ENCODE measurements at regions of chr16 and their contacts with region 1.

Region 1: DNA sequence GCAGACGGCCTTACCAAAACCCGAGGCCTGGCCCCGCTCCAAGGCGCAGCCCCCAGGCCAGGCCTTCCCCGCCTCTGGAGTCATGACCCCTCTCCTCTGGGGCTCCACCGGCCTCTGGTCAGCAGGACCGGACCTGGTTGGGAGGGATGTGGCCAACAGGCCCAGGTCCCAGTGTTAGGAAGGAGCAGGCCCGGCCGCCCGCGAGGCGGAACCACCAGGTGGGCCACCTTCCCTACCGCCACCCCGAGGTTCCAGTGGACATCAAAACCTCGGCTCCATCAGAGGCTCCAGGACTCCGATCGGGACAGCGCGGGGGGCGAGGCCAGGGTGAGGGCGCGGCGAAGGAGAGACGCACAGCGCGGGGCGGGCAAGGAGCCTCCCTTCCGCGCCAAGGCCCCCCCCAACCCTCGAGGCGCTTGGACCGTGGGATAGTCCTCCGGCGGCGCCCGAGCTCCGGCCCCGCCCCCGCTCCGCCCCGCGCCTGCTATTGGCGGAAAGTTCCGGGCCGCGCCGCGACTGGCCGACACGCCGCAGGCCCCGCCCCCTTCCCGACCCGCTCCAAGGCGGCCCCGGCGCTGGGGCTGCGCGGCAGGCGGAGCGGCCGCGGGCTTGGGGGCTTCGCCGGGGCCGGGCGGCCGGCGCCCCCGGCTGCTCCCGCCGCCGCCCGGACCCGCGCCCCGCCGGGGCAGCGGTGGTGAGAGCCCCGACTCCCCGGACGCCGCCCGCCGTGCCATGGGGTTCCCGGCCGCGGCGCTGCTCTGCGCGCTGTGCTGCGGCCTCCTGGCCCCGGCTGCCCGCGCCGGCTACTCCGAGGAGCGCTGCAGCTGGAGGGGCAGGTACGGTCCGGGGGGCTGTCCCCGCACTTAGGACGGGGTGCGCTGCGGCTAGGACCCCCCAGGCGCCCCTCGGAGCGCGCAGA is at the start of gene METRN:
- DNase-seq: peak; percentile 61
- ATAC-seq: peak; percentile 54
- H3K4me3 ChIP-seq: peak within 1 kb of the TSS; percentile 58 to 77 (median 66); a peak in 5 of 6 replicates
- H3K27ac ChIP-seq: peak within 1 kb of the TSS; percentile 45
- H3K4me1 ChIP-seq: peaks cover 45% of the 10 kb centered on the region
- H3K27me3 ChIP-seq: peaks cover 0 to 16% of the 10 kb centered on the region in 2 experiments; a peak in 3 of 5 replicates
- CTCF ChIP-seq: peak; percentile 15; the same call in 1 of the 2 replicates
- EP300 ChIP-seq: no peak
- POLR2A ChIP-seq: no peak
- RAD21 ChIP-seq: no peak
- total RNA-seq, gene METRN: 27.3 and 46.1 TPM in 2 replicates

Region 2: GRCh38 chr16:726438-727290 is 11.8 kb after region 1 on chr16 and contains the starts of genes CCDC78 and HAGHL:
- CTCF ChIA-PET with region 1: no interaction called
- POLR2A ChIA-PET with region 1: interaction called, 14 read pairs
- in situ Hi-C with region 1: no loop called
- intact Hi-C with region 1: no loop called
- DNase-seq: no peak
- ATAC-seq: peak; percentile 19
- H3K4me3 ChIP-seq: peak within 1 kb of the TSS; percentile 57 to 82 (median 66)
- H3K27ac ChIP-seq: no peak within 1 kb of the TSS
- H3K4me1 ChIP-seq: peaks cover 16% of the 10 kb centered on the region
- H3K27me3 ChIP-seq: peaks cover 0 to 3% of the 10 kb centered on the region in 2 experiments; a peak in 1 of 5 replicates
- CTCF ChIP-seq: peak; percentile 13; the same call in 1 of the 2 replicates
- EP300 ChIP-seq: no peak
- POLR2A ChIP-seq: 0 out of 4 replicates have a peak, but pooled peaks of 1 of the 2 experiments have one; percentile 3
- RAD21 ChIP-seq: no peak
- total RNA-seq, gene CCDC78: 0.53 TPM in 1 of 2 replicates, not detected in the other
- total RNA-seq, gene HAGHL: 3.4 and 4.7 TPM in 2 replicates

Region 3: DNA sequence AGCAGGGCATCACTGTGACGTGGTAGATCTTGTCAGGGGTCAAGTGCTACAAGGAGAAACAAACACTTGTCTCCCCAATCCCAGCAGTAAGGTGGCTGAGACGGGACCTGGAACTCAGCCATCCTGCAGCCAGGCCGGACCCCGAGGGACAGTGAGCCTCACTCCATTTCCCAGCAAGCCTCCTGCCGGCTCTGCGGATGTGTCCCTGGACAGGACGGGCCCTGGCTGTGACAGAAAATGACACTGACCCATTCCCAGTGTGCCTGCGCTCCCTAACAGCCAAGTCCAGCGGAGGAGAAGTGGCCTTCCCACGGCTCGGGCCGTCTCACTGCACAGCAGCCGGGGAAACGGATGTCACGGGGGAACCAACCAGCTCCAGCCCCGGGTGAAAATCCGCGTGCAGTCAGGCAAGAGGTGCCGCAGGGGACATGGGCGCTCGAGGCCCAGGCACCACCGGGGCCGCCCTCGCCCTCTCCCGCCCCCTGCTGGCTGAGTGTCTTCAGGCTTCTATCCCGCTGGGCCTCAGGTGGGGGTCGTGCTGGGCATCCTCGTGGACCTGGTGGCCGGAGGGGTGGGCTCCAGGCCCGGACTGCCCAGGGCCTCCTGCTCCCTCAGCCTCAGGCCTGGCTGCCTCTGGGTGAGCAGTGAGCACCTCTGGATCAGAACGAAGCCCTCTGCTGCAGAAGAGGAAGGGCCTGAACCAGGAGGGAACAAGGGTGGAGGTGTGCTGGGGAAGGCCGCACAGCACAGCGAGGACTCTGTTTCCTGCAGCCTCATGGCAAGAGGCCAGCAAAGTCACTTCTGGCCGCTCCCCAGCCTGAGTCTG is 18.8 kb after region 1 on chr16:
- CTCF ChIA-PET with region 1: interaction called, 19 read pairs
- POLR2A ChIA-PET with region 1: interaction called, 7 read pairs
- in situ Hi-C with region 1: no loop called
- intact Hi-C with region 1: no loop called
- DNase-seq: no peak
- ATAC-seq: peak; percentile 61
- H3K4me3 ChIP-seq: no peak overlapping the region
- H3K27ac ChIP-seq: no peak overlapping the region
- H3K4me1 ChIP-seq: no peaks in the 10 kb centered on the region
- H3K27me3 ChIP-seq: no peaks in the 10 kb centered on the region
- CTCF ChIP-seq: peak; percentile 72
- EP300 ChIP-seq: no peak
- POLR2A ChIP-seq: no peak
- RAD21 ChIP-seq: peak; percentile 74

Region 4: GRCh38 chr16:740764-741505 is 26.1 kb after region 1 on chr16 and contains the start of gene CIAO3:
- CTCF ChIA-PET with region 1: interaction called, 3 read pairs
- POLR2A ChIA-PET with region 1: interaction called, 22 read pairs
- in situ Hi-C with region 1: no loop called
- intact Hi-C with region 1: no loop called
- DNase-seq: peak; percentile 79
- ATAC-seq: peak; percentile 85
- H3K4me3 ChIP-seq: peak within 1 kb of the TSS; percentile 94 to 97 (median 95)
- H3K27ac ChIP-seq: peak within 1 kb of the TSS; percentile 59
- H3K4me1 ChIP-seq: peaks cover 18% of the 10 kb centered on the region
- H3K27me3 ChIP-seq: no peaks in the 10 kb centered on the region
- CTCF ChIP-seq: peak; percentile 94
- EP300 ChIP-seq: 0 out of 4 replicates have a peak, but pooled peaks of 1 of the 2 experiments have one; percentile 11
- POLR2A ChIP-seq: peak; percentile 50 to 68; a peak in 3 of 4 replicates
- RAD21 ChIP-seq: peak; percentile 78
- total RNA-seq, gene CIAO3: 16.9 and 21.7 TPM in 2 replicates

Region 5: DNA sequence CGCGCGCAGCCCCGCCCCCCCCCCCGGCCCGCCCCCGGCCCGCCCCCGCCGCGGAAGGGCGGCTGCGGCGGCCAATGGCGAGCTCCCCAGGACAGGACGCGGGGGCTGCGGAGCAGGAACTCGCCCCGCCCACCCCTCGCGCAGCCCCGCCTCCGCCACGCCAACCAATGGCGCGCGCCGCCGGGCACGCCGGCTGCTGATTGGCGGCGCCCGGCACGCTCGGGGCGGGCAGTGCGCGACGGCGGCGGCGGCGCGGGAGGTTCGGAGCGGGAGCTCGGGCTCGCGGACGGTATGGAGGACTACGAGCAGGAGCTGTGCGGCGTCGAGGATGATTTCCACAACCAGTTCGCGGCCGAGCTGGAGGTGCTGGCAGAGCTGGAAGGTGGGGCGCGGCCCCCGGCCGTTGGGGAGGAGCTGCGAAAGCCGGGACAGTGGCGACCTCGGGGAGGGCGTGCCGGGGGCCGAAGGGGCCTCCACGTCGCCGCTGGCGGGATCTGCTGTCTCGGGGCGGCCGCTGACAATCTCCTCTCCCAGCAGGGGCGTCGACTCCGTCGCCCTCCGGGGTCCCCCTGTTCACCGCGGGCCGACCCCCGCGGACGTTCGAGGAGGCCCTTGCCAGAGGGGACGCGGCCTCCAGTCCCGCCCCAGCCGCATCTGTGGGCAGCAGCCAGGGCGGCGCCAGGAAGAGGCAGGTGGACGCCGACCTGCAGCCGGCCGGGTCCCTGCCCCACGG is 73.7 kb after region 1 on chr16 and contains the start of gene CHTF18:
- CTCF ChIA-PET with region 1: interaction called, 16 read pairs
- POLR2A ChIA-PET with region 1: interaction called, 12 read pairs
- in situ Hi-C with region 1: loop called (anchors 5 kb)
- intact Hi-C with region 1: no loop called
- DNase-seq: peak; percentile 73
- ATAC-seq: peak; percentile 66
- H3K4me3 ChIP-seq: peak within 1 kb of the TSS; percentile 71 to 96 (median 90)
- H3K27ac ChIP-seq: peak within 1 kb of the TSS; percentile 47
- H3K4me1 ChIP-seq: peaks cover 15% of the 10 kb centered on the region
- H3K27me3 ChIP-seq: no peaks in the 10 kb centered on the region; a peak in 1 of 5 replicates
- CTCF ChIP-seq: no peak
- EP300 ChIP-seq: no peak
- POLR2A ChIP-seq: peak in 1 of 2 experiments; percentile 57; a peak in 1 of 4 replicates
- RAD21 ChIP-seq: no peak
- total RNA-seq, gene CHTF18: 8.8 and 22.9 TPM in 2 replicates

Measured in HepG2 (cell line).